CD4-positive, alpha-beta memory T cell (primary cell): ENCODE measurements at regions of chr12 and their contacts with region 1.

Region 1: DNA sequence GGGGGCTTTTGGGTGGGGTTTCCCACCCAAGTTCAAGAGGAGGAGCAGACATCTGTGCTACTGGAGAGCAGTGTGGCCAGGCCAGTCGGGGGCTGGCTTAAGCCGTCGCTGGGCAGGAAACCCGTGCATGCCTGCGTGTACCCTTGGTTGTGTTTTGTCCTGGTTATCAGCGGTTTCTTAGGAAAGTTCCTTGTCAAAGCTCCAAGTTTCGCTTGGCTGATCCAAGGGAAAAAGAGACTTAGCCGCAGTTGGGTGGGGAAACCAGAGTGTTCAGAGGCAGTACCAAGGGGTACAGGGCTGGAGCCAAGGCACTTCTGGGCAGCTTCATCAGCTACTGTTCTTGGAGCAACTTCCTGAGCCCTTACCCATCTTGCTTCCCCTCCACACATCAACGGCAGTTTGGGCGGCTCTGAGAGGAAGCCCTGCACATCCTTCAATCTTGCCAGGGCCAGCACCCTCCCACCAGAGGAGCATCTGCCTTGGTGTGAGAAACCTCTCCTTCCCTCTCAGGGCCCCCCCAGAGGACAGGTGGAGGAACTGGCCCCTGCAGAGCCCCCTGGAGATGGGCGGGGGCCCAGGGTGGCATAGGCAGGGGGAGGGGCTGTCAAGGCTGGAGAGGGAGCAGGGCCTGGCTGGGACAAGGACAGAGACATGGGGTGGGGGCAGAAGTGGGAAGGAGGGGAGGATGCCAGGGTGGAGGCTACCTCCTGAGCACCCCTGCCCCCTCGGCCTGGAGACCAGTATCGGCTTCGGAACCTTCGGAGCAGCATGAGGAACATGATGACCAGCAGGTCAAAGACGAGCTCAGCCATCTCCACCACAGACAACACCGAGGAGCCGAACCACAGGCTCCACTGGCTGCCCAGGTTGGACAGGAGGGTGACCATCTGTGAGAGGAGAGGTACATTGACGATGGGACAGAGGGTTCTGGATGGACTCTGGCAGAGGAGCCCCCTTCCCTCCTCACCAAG is 5.8 kb upstream of the TNFRSF1A start:
- DNase-seq: no peak
- H3K4me3 ChIP-seq: no peak overlapping the region
- H3K4me3 Mint-ChIP-seq: no peak overlapping the region
- H3K27ac ChIP-seq: no peak overlapping the region
- H3K27ac Mint-ChIP-seq: no peak overlapping the region
- H3K4me1 ChIP-seq: peaks cover 41% of the 10 kb centered on the region
- H3K4me1 Mint-ChIP-seq: peaks cover 24 to 42% (median 33%) of the 10 kb centered on the region in 4 donors
- H3K27me3 ChIP-seq: no peaks in the 10 kb centered on the region
- H3K27me3 Mint-ChIP-seq: no peaks in the 10 kb centered on the region

Region 2: GRCh38 chr12:6313326-6313940 is 34.2 kb before region 1 on chr12:
- CTCF ChIA-PET with region 1: no interaction called
- POLR2A ChIA-PET with region 1: no interaction called
- intact Hi-C with region 1: no loop called
- DNase-seq: no peak
- H3K4me3 ChIP-seq: no peak overlapping the region
- H3K4me3 Mint-ChIP-seq: no peak overlapping the region
- H3K27ac ChIP-seq: no peak overlapping the region
- H3K27ac Mint-ChIP-seq: peak overlapping the region in 1 of 7 donors; percentile 9
- H3K4me1 ChIP-seq: peaks cover 14% of the 10 kb centered on the region
- H3K4me1 Mint-ChIP-seq: peaks cover 7 to 13% (median 9%) of the 10 kb centered on the region in 4 donors
- H3K27me3 ChIP-seq: peaks cover 5% of the 10 kb centered on the region
- H3K27me3 Mint-ChIP-seq: peaks cover 7 to 10% of the 10 kb centered on the region in 2 donors

Region 3: DNA sequence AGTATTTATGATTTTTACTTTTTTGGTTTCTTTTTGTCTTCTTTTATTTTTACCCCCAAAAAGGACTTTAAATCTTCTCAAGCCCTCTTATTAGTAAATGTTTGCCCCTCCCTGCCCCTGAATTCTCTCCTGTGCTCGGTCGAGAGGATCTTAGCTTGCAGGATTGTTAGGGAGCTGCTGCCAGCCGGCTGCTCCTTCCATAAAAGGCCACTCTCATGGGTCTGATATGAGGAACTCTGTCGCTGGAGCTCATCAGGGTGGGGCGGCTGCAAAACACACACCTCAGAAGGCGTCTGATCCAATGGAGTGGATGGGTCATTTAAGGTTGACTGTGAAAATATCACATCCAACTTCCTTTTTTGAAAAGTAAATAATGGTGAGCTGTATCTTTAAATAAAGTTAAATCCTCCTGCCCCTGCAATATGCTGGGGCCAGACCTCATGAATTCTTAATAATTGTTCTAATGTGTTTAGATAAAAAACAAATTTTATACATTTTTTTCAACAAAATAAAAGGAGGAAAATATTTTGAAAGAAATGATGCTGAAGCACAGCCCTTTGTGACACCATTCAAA is 44.9 kb after region 1 on chr12:
- CTCF ChIA-PET with region 1: no interaction called
- POLR2A ChIA-PET with region 1: no interaction called
- intact Hi-C with region 1: loop called (anchors 1 kb)
- DNase-seq: no peak
- H3K4me3 ChIP-seq: no peak overlapping the region
- H3K4me3 Mint-ChIP-seq: no peak overlapping the region
- H3K27ac ChIP-seq: no peak overlapping the region
- H3K27ac Mint-ChIP-seq: no peak overlapping the region
- H3K4me1 ChIP-seq: no peaks in the 10 kb centered on the region
- H3K4me1 Mint-ChIP-seq: no peaks in the 10 kb centered on the region
- H3K27me3 ChIP-seq: no peaks in the 10 kb centered on the region
- H3K27me3 Mint-ChIP-seq: peaks cover 0 to 2% of the 10 kb centered on the region in 2 donors